ENCODE measurements at regions of chr7 and their contacts with region 1.

Region 1: GRCh38 chr7:27662490-27663205 is at the start of gene HIBADH:
- DNase-seq: peak; percentile 97
- H3K4me3 ChIP-seq: peak within 1 kb of the TSS; percentile 66
- H3K27me3 ChIP-seq: no peaks in the 10 kb centered on the region
- CTCF ChIP-seq: no peak; the same call in 1 of the 2 replicates
- polyA plus RNA-seq, gene HIBADH: 42.4 and 70.4 TPM in 2 replicates

Region 2: DNA sequence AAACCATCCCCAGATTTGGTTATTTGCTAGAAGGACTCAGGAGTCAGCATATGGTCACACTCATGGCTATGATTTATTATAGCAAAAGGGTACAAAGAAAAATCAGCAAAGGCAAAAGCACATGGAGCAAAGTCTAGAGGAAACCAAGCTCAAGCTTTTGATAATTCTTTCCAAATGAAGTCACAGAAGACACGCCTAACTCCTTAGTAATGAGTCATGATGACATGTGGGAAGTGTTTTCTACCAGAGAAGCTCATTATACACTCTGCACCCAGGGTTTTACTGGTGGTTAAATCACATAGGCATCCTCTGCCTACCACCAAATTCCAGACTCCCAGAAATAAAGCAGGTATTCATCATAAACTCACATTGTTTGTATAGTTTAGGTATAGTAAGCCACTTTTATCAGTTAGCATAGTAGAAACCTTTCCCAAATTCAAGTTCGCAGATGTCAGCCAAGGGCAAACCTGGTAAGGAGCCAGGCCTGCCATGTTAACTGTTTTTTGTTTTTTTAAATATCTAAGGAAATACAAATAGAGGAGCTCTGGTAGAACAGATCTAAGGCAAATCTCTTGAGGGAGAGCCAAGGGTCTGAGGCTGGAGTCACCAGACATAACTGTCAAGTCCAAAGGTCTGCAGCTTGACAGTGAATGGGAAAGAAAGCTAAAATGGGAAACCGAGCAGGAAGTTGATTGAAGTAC is 15.4 kb after region 1 on chr7:
- CTCF ChIA-PET with region 1: interaction called, 3 read pairs
- POLR2A ChIA-PET with region 1: interaction called, 13 read pairs
- DNase-seq: peak; percentile 96
- H3K4me3 ChIP-seq: no peak overlapping the region
- H3K27me3 ChIP-seq: no peaks in the 10 kb centered on the region
- CTCF ChIP-seq: no peak

Region 3: GRCh38 chr7:27688056-27688455 is 25.4 kb after region 1 on chr7:
- CTCF ChIA-PET with region 1: no interaction called
- POLR2A ChIA-PET with region 1: interaction called, 12 read pairs
- DNase-seq: no peak
- H3K4me3 ChIP-seq: no peak overlapping the region
- H3K27me3 ChIP-seq: no peaks in the 10 kb centered on the region
- CTCF ChIP-seq: no peak

Region 4: GRCh38 chr7:28674359-28674782 is 1011.7 kb after region 1 on chr7:
- CTCF ChIA-PET with region 1: no interaction called
- POLR2A ChIA-PET with region 1: no interaction called
- DNase-seq: no peak
- H3K4me3 ChIP-seq: no peak overlapping the region
- H3K27me3 ChIP-seq: no peaks in the 10 kb centered on the region
- CTCF ChIP-seq: no peak

Measured in BJ (cell line).